ENCODE measurements at regions of chr7 and their contacts with region 1.

Region 1: DNA sequence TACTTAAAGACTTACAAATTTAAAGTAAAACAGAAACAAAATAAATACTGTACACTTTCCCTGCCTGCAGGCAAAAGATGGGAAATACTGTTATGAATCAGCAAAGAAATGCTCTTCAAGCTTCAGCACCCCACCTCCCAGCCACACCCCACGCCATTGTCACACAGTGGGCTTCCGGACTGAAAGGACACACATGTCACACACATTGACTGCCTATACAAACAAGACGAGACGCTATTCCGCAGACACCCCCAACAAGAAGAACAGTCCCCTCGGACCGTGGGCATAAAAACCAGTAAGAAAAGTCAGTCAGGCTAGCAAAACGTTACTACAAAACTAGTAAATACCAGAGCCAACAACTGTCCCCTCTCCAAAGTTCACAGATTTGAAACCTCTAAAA is 22.2 kb upstream of the PARP12 start:
- DNase-seq: peak; percentile 73
- ATAC-seq: peak; percentile 74
- H3K4me3 Mint-ChIP-seq: peak overlapping the region; percentile 55
- H3K27ac Mint-ChIP-seq: peak overlapping the region; percentile 47
- H3K4me1 Mint-ChIP-seq: peaks cover 34% of the 10 kb centered on the region
- H3K27me3 Mint-ChIP-seq: no peaks in the 10 kb centered on the region
- CTCF ChIP-seq: no peak

Region 2: DNA sequence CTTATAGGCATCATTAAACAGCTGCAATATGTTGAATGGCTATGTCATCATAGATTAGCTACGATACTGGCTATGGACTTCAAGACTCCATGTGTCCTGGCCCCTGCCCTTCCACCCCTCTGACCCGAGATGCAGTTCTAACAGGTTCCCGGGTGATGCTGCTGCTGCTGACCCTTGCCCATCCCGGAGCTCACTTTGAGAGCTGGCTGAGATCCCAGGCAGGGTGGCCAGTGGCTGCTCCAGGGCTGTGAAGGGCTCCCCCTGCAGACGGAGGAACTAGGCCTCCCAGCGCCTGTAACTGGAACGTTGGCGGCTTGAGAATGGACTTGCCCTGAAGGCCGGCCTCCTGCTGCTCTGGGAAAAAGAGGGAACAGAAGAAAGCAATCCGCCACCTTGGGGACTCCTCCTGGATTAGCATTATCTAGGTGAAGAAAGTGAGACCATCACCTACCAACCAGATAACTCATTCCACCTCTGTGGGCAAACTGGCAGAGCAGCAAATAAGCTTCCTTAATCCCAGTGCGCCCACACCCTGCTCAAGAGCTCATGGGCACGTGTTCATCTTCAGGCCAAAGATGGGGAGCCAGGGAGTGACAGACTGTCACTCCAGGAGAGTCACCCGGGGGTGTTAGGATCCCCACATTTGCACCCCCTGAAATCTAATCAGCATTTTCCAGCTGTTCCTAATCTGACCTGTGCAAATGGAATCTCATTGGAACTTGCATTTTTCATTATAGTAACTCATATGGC is 79.0 kb before region 1 on chr7:
- CTCF ChIA-PET with region 1: no interaction called
- POLR2A ChIA-PET with region 1: no interaction called
- intact Hi-C with region 1: no loop called
- DNase-seq: no peak
- ATAC-seq: no peak
- H3K4me3 Mint-ChIP-seq: no peak overlapping the region
- H3K27ac Mint-ChIP-seq: no peak overlapping the region
- H3K4me1 Mint-ChIP-seq: no peaks in the 10 kb centered on the region
- H3K27me3 Mint-ChIP-seq: no peaks in the 10 kb centered on the region
- CTCF ChIP-seq: no peak

Region 3: DNA sequence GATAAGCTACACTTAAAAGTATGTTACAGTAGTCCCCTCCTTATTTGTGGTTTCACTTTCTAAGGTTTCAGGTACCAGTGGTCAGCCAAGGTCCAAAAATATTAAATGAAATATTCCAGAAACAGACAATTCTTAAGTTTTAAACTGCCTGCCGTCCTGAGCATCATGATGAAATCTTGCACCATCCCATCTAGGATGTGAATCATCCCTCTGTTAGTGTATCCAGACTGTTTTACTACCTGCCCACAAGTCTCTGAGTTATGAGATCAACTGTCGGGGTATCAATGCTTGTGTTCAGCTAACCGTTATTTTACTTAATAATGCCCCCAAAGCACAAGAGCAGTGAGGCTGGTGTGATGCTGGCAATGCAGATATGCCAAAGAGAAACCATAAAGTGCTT is 80.5 kb after region 1 on chr7:
- CTCF ChIA-PET with region 1: no interaction called
- POLR2A ChIA-PET with region 1: interaction called, 3 read pairs
- intact Hi-C with region 1: loop called (anchors 10 kb)
- DNase-seq: peak; percentile 21
- ATAC-seq: peak; percentile 83
- H3K4me3 Mint-ChIP-seq: peak overlapping the region; percentile 59
- H3K27ac Mint-ChIP-seq: peak overlapping the region; percentile 96
- H3K4me1 Mint-ChIP-seq: peaks cover 80% of the 10 kb centered on the region
- H3K27me3 Mint-ChIP-seq: no peaks in the 10 kb centered on the region
- CTCF ChIP-seq: no peak

Region 4: GRCh38 chr7:140304191-140304799 is 219.3 kb after region 1 on chr7:
- CTCF ChIA-PET with region 1: no interaction called
- POLR2A ChIA-PET with region 1: no interaction called
- intact Hi-C with region 1: loop called (anchors 10 kb)
- DNase-seq: peak; percentile 55
- ATAC-seq: peak; percentile 95
- H3K4me3 Mint-ChIP-seq: peak overlapping the region; percentile 35
- H3K27ac Mint-ChIP-seq: peak overlapping the region; percentile 92
- H3K4me1 Mint-ChIP-seq: peaks cover 9% of the 10 kb centered on the region
- H3K27me3 Mint-ChIP-seq: no peaks in the 10 kb centered on the region
- CTCF ChIP-seq: peak; percentile 62

Measured in activated CD8-positive, alpha-beta T cell treated with anti-CD3 and anti-CD28 coated beads for 36 hours (primary cell).